ENCODE measurements at regions of chr21 and their contacts with region 1.

Region 1: GRCh38 chr21:31180256-31181081 is 142.2 kb upstream of the KRTAP19-8 start:
- DNase-seq: peak in 1 of 3 donors; percentile 41
- ATAC-seq: peak; percentile 35
- H3K4me3 ChIP-seq: no peak overlapping the region
- H3K4me1 ChIP-seq: no peaks in the 10 kb centered on the region
- CTCF ChIP-seq: peak; percentile 19

Region 2: DNA sequence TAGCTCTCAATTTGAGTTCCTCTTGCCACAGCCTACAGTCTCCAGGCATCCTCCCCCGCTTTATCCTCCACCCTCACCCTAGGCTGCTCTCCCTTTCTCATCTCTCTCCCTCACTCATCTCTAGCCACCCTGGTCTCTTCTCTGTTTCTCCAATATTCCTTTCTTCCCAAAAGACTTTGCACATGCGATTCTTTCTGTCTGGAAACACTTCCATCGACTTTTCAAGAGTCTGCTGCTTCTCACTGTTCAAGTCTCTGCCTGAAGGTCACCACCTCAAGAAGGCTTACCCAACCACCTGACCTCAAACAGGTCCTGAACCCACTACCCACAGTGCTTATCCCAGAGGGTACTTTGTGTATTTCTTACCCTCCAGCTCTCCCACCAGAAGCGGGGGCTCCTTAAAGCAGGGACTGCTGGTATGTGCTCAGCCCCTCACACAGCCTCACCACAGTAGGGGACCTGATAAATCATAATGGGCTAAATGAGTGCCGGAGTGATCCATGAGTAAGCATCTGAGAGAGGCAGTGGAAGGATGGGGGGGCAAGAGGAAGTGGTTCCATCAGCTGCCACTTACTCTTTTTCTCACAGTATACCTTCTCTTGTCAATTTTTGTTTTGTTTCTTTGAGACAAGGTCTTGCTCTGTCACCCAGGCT is 127.9 kb before region 1 on chr21:
- intact Hi-C with region 1: no loop called
- DNase-seq: no peak
- ATAC-seq: no peak
- H3K4me3 ChIP-seq: no peak overlapping the region
- H3K4me1 ChIP-seq: no peaks in the 10 kb centered on the region
- CTCF ChIP-seq: no peak

Region 3: DNA sequence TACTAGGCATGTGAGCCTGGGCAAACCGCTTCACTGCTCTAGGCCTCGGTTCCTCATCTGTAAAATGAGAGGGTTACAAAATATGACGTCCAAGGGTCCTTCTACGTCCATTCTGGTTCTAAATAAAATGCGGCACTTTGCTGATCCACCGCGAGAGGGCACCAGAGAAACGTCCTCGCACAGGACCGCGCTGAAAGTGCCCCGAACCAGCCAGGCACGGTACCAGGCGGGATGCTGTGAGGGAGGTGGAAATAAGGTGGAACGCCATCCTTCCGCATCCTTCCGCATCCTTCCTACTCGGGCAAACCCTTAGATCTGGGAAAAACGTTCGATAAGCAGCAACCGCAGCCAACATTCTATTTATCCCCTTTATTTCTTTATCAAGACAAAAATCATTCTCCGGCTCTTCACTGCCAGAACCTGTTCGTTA is 81.9 kb before region 1 on chr21:
- intact Hi-C with region 1: loop called in 1 of 2 experiments (anchors 10 kb)
- DNase-seq: peak; percentile 63 to 70 (median 67)
- ATAC-seq: peak; percentile 81
- H3K4me3 ChIP-seq: no peak overlapping the region
- H3K4me1 ChIP-seq: no peaks in the 10 kb centered on the region
- CTCF ChIP-seq: peak; percentile 78

Region 4: GRCh38 chr21:31248601-31249000 is 68.1 kb after region 1 on chr21:
- intact Hi-C with region 1: no loop called
- DNase-seq: no peak
- ATAC-seq: no peak
- H3K4me3 ChIP-seq: no peak overlapping the region
- H3K4me1 ChIP-seq: no peaks in the 10 kb centered on the region
- CTCF ChIP-seq: no peak

Measured in mucosa of descending colon (tissue), 3 donors.